CD8-positive, alpha-beta T cell (primary cell): ENCODE measurements at regions of chr4 and their contacts with region 1.

Region 1: GRCh38 chr4:142194905-142195304 is 558.5 kb downstream of the IL15 start:
- DNase-seq: no peak
- ATAC-seq: no peak
- H3K4me3 ChIP-seq: no peak overlapping the region
- H3K4me3 Mint-ChIP-seq: no peak overlapping the region
- H3K27ac ChIP-seq: no peak overlapping the region
- H3K27ac Mint-ChIP-seq: no peak overlapping the region
- H3K4me1 ChIP-seq: no peaks in the 10 kb centered on the region
- H3K4me1 Mint-ChIP-seq: no peaks in the 10 kb centered on the region
- H3K27me3 ChIP-seq: no peaks in the 10 kb centered on the region
- H3K27me3 Mint-ChIP-seq: no peaks in the 10 kb centered on the region
- CTCF ChIP-seq: no peak

Region 2: GRCh38 chr4:142155347-142155746 is 39.6 kb before region 1 on chr4:
- CTCF ChIA-PET with region 1: no interaction called
- POLR2A ChIA-PET with region 1: no interaction called
- intact Hi-C with region 1: loop called in 1 of 2 experiments (anchors 5 kb)
- DNase-seq: no peak
- ATAC-seq: no peak
- H3K4me3 ChIP-seq: no peak overlapping the region
- H3K4me3 Mint-ChIP-seq: no peak overlapping the region
- H3K27ac ChIP-seq: no peak overlapping the region
- H3K27ac Mint-ChIP-seq: no peak overlapping the region
- H3K4me1 ChIP-seq: no peaks in the 10 kb centered on the region
- H3K4me1 Mint-ChIP-seq: peaks cover 2% of the 10 kb centered on the region
- H3K27me3 ChIP-seq: no peaks in the 10 kb centered on the region
- H3K27me3 Mint-ChIP-seq: no peaks in the 10 kb centered on the region
- CTCF ChIP-seq: no peak

Region 3: DNA sequence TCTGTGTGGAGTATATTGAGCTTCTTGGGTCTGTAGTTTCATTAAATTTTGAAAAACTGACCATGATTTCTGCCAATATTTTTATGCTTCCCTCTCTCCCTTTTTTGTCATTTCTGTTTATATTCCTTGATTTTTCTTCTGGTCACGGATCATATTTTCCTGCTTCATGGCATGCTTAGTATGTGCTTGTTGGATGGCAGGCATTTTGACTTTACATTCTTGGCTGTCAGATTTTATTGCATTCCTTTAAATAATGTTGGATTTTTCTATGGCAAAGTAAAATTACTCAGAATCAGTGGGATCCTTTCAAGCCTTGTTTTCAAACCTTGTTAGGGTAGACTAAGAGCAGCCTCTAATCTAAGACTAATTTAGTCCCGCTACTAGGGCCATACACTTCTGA is 26.7 kb before region 1 on chr4:
- CTCF ChIA-PET with region 1: no interaction called
- POLR2A ChIA-PET with region 1: no interaction called
- intact Hi-C with region 1: loop called in 1 of 2 experiments (anchors 2 kb)
- DNase-seq: no peak
- ATAC-seq: no peak
- H3K4me3 ChIP-seq: no peak overlapping the region
- H3K4me3 Mint-ChIP-seq: no peak overlapping the region
- H3K27ac ChIP-seq: no peak overlapping the region
- H3K27ac Mint-ChIP-seq: no peak overlapping the region
- H3K4me1 ChIP-seq: no peaks in the 10 kb centered on the region
- H3K4me1 Mint-ChIP-seq: peaks cover 3% of the 10 kb centered on the region
- H3K27me3 ChIP-seq: no peaks in the 10 kb centered on the region
- H3K27me3 Mint-ChIP-seq: no peaks in the 10 kb centered on the region
- CTCF ChIP-seq: no peak

Region 4: GRCh38 chr4:142211424-142211823 is 16.5 kb after region 1 on chr4:
- CTCF ChIA-PET with region 1: no interaction called
- POLR2A ChIA-PET with region 1: no interaction called
- intact Hi-C with region 1: no loop called
- DNase-seq: peak in 1 of 9 experiments; percentile 14
- ATAC-seq: no peak
- H3K4me3 ChIP-seq: no peak overlapping the region
- H3K4me3 Mint-ChIP-seq: no peak overlapping the region
- H3K27ac ChIP-seq: no peak overlapping the region
- H3K27ac Mint-ChIP-seq: no peak overlapping the region
- H3K4me1 ChIP-seq: no peaks in the 10 kb centered on the region
- H3K4me1 Mint-ChIP-seq: peaks cover 8% of the 10 kb centered on the region
- H3K27me3 ChIP-seq: no peaks in the 10 kb centered on the region
- H3K27me3 Mint-ChIP-seq: no peaks in the 10 kb centered on the region
- CTCF ChIP-seq: no peak